Mucosa of descending colon (tissue), 3 donors: ENCODE measurements at regions of chr4 and their contacts with region 1.

Region 1: DNA sequence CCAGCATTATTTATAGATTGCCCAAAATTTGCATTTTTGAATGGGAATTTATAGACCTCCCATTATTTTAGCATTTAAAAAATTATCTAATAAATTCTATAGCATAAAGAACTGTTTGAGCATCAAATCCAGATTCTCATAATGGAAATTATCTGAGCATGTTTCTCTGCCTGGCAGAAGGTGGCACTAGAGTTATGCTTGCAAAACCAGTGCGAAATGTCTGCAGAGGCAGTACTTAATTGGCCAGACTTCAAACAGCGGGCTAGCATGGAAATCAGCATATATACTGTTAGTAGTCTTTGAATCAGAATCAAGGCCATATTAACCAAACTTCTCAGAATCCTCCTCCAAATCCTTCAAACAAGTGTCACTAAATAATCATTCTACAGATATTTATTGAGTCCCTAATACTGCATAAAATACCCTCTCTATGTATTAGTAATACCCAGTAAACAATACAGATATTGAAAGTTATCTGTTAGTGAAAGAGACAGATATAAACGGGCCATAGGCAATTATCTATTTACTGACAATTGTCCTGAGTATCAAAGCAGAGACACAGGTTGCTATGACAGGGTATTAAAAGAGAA is 78.7 kb upstream of the DCLK2 start:
- DNase-seq: peak in 1 of 3 donors; percentile 31
- ATAC-seq: peak; percentile 42
- H3K4me3 ChIP-seq: no peak overlapping the region
- H3K4me1 ChIP-seq: no peaks in the 10 kb centered on the region
- CTCF ChIP-seq: no peak

Region 2: GRCh38 chr4:149897783-149898182 is 101.8 kb before region 1 on chr4:
- intact Hi-C with region 1: no loop called
- DNase-seq: no peak
- ATAC-seq: peak; percentile 44
- H3K4me3 ChIP-seq: no peak overlapping the region
- H3K4me1 ChIP-seq: peaks cover 4% of the 10 kb centered on the region
- CTCF ChIP-seq: no peak

Region 3: DNA sequence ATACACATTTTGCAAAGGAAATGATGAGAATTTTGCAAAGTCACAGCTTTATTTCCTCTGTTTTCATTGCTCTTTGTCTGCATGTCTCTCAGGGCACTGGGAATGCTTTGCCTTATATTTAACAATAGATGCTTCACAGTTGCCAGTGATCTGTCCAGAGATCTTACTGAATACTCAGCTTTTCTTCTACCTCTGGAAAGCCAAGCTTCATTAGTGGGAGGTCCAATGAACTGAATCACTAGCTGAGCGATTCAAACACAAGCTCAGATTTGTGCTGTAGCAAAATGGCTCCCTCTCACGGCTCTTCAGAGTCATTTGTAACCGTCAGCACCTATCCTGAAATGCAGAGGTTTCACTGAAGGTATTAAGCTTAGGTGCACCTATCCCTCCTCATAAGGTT is 217.6 kb after region 1 on chr4:
- intact Hi-C with region 1: loop called in 1 of 2 experiments (anchors 10 kb)
- DNase-seq: no peak
- ATAC-seq: no peak
- H3K4me3 ChIP-seq: no peak overlapping the region
- H3K4me1 ChIP-seq: no peaks in the 10 kb centered on the region
- CTCF ChIP-seq: no peak

Region 4: DNA sequence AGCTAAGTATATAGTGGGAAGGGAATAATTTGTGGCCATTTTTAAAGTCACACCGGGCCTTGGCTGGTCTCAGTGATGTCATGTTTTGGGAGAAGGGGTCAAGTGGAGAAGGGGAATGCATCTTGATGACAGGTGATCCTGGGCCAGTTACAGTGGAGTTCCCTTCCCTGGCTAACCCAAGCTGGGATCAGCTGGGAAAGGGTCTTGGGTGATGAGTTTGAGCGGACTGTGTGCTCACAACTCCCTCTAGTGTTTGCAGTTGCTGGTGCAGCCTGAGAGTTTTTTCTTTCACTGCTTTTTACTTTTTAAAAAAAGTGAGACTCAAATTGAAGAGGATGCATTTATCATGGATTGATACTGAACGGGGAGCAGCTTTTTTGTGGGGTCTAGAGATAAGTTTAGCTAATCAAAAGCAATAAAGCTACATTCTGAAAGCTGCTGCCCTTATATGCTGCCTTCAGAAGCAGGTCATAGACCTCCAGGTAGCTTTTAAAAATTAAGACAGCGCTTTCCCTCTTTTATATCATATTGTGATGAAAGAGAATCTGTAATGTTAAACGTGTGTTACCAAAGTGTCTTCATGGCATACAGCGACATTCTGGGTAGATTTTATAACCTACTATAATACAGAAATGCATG is 243.4 kb after region 1 on chr4:
- intact Hi-C with region 1: loop called (anchors 10 kb)
- DNase-seq: peak in 1 of 3 donors; percentile 58
- ATAC-seq: peak; percentile 63
- H3K4me3 ChIP-seq: no peak overlapping the region
- H3K4me1 ChIP-seq: no peaks in the 10 kb centered on the region
- CTCF ChIP-seq: peak; percentile 64

Region 5: DNA sequence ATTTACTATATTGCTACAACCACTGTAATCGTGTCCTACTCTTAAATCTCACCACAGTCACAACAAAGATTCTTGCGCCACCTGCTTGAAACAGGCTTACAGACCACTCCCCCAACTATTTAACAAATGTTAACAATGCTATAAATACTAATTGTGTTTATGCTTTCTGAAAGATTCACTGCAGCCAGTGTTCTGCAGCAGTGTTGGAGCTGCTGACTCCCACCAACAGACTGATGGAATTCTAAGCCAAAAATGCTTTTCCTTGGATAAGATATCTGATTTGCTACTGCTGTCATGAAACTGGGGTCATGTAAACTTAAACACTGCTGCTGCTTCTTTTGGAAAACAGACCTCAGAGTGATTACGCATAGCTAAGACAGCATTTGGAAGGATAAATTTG is 338.2 kb after region 1 on chr4:
- intact Hi-C with region 1: no loop called
- DNase-seq: no peak
- ATAC-seq: peak; percentile 14
- H3K4me3 ChIP-seq: no peak overlapping the region
- H3K4me1 ChIP-seq: no peaks in the 10 kb centered on the region
- CTCF ChIP-seq: no peak

Region 6: GRCh38 chr4:150664935-150665334 is 665.4 kb after region 1 on chr4:
- intact Hi-C with region 1: no loop called
- DNase-seq: no peak
- ATAC-seq: peak; percentile 61
- H3K4me3 ChIP-seq: no peak overlapping the region
- H3K4me1 ChIP-seq: no peaks in the 10 kb centered on the region
- CTCF ChIP-seq: no peak

Region 7: GRCh38 chr4:150867148-150867547 is 867.6 kb after region 1 on chr4:
- intact Hi-C with region 1: loop called in 1 of 2 experiments (anchors 10 kb)
- DNase-seq: peak in 1 of 3 donors; percentile 82
- ATAC-seq: peak; percentile 89
- H3K4me3 ChIP-seq: no peak overlapping the region
- H3K4me1 ChIP-seq: no peaks in the 10 kb centered on the region
- CTCF ChIP-seq: no peak